A549 (cell line): ENCODE measurements at regions of chr2 and their contacts with region 1.

Region 1: GRCh38 chr2:46942139-46942517 is 26.5 kb upstream of the MCFD2 start:
- DNase-seq: peak in 1 of 2 experiments; percentile 38
- ATAC-seq: peak in 1 of 2 experiments; percentile 23; a peak in 3 of 6 replicates
- H3K4me3 ChIP-seq: peak overlapping the region; percentile 72
- H3K27ac ChIP-seq: peak overlapping the region; percentile 92 to 95
- H3K4me1 ChIP-seq: peaks cover 48% of the 10 kb centered on the region
- CTCF ChIP-seq: no peak
- EP300 ChIP-seq: no peak
- POLR2A ChIP-seq: no peak
- RAD21 ChIP-seq: no peak

Region 2: DNA sequence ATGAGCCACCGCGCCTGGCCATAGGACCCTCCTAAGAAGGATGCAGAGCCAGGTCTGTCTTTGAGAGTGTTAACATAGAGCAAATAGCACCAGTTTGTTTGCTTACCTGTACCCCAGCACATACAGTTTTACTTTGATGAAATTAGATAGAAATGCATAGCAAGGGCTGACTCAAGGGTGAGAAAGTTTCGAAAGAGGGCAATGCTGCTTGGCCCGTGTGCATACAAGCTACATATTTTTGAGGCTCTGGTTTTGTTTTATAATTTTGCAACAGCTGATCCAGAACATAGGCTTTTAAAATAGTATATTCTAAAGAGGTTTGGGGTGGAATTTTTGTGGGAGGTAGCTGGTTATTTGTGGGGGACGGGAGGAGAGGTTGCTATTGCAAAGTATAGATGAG is 178.3 kb before region 1 on chr2:
- CTCF ChIA-PET with region 1: no interaction called
- POLR2A ChIA-PET with region 1: no interaction called
- DNase-seq: no peak
- ATAC-seq: no peak
- H3K4me3 ChIP-seq: no peak overlapping the region
- H3K27ac ChIP-seq: no peak overlapping the region
- H3K4me1 ChIP-seq: peaks cover 15% of the 10 kb centered on the region
- CTCF ChIP-seq: no peak
- EP300 ChIP-seq: no peak
- POLR2A ChIP-seq: no peak
- RAD21 ChIP-seq: no peak

Region 3: GRCh38 chr2:46915811-46916630 is 26.1 kb before region 1 on chr2:
- CTCF ChIA-PET with region 1: interaction called, 27 read pairs
- POLR2A ChIA-PET with region 1: no interaction called
- DNase-seq: peak; percentile 88 to 92
- ATAC-seq: peak; percentile 92
- H3K4me3 ChIP-seq: peak overlapping the region; percentile 80
- H3K27ac ChIP-seq: peak overlapping the region; percentile 94 to 96
- H3K4me1 ChIP-seq: peaks cover 33% of the 10 kb centered on the region
- CTCF ChIP-seq: no peak
- EP300 ChIP-seq: no peak
- POLR2A ChIP-seq: peak; percentile 69
- RAD21 ChIP-seq: no peak; a peak in 1 of 5 replicates

Region 4: GRCh38 chr2:46923041-46923528 is 19.0 kb before region 1 on chr2:
- CTCF ChIA-PET with region 1: interaction called, 27 read pairs
- POLR2A ChIA-PET with region 1: no interaction called
- DNase-seq: peak in 1 of 2 experiments; percentile 53
- ATAC-seq: peak in 1 of 2 experiments; percentile 65; a peak in 3 of 6 replicates
- H3K4me3 ChIP-seq: no peak overlapping the region
- H3K27ac ChIP-seq: no peak overlapping the region
- H3K4me1 ChIP-seq: peaks cover 18% of the 10 kb centered on the region
- CTCF ChIP-seq: no peak
- EP300 ChIP-seq: no peak
- POLR2A ChIP-seq: no peak
- RAD21 ChIP-seq: no peak

Region 5: DNA sequence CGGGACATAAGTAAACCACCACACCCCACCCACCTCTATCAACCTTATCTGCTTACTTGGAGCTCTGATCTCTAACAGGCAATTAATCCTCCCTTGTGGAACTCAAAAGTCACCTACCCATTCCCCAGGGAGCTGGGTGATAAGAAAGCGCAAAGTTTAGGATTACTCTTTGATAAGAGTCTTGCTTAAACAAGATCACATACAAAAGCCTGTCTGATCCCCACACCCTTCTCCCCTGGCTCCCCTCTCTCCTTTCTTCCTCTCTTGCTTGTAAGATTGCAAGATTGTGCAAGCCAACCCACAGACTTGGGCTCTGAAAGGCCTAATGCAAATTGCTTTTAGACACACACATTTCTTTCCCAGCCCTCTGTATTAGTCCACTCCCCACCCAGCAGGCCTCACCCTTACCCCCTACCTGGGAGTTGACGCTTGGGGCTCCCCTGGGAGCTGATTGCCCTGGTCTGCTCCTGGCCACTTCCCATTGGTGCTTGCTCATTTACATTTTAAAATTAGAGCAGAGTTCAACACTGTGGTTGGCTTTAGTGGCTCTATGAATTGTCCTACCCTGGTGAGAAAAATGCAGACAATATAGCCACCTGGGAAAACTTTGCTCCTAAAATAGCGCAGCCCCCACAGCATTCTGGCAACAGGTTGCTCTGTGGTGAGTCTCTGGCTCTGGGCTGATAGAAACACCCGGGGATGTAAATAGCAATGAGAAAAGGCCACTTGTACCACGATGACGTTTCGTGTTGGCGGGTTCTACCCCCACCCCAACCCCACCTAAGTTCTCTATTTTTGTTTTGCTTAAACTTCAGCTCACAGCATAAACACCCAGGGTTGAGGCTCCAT is 368.0 kb after region 1 on chr2:
- CTCF ChIA-PET with region 1: no interaction called
- POLR2A ChIA-PET with region 1: interaction called, 12 read pairs
- DNase-seq: peak in 1 of 2 experiments; percentile 90
- ATAC-seq: peak; percentile 63 to 66
- H3K4me3 ChIP-seq: no peak overlapping the region
- H3K27ac ChIP-seq: peak overlapping the region; percentile 78 to 83
- H3K4me1 ChIP-seq: peaks cover 73% of the 10 kb centered on the region
- CTCF ChIP-seq: no peak
- EP300 ChIP-seq: peak in 1 of 2 experiments; percentile 30; a peak in 1 of 5 replicates
- POLR2A ChIP-seq: no peak
- RAD21 ChIP-seq: 0 out of 5 replicates have a peak, but pooled peaks of 1 of the 2 experiments have one; percentile 23